Lower lobe of right lung (tissue), 2 donors: ENCODE measurements at regions of chr13 and their contacts with region 1.

Region 1: GRCh38 chr13:76903544-76904162 is 17.4 kb upstream of the KCTD12 start:
- DNase-seq: peak; percentile 60
- ATAC-seq: peak; percentile 92 to 97
- H3K4me3 ChIP-seq: no peak overlapping the region
- H3K27ac ChIP-seq: no peak overlapping the region
- H3K4me1 ChIP-seq: no peaks in the 10 kb centered on the region
- H3K27me3 ChIP-seq: no peaks in the 10 kb centered on the region
- CTCF ChIP-seq: peak; percentile 98

Region 2: DNA sequence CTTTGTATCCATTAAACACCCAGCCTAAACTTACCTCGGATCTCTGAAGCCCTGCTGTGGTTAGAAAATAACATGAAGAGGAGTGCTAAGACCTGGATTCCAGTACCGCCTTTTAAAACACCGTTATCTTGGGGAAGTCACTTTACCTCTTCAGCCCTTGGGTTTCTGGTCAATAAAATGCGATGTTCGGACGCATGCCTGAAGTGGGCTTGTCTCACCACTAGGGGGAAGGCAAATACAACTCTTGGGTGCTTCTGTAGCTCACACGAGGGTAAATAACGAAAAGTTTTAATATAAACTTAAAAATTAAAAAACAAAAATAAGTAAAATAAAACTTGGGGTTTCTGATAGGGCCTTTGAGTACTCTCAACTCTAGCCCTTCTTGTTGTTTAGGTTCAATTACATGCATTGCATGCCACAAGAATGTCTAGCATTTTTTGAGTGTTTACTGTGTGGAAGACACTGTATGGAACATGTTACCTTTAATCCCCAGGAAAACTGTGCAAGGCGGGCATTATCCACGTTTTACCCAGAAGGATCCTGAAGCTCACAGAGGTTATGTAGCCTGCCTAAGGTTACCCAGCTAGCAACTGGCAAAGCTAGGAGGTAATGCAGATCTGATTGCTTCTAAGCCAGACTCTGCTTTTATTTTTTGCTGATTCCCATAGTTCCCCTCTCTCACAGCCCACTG is 1027.1 kb before region 1 on chr13:
- intact Hi-C with region 1: loop called (anchors 10 kb)
- DNase-seq: no peak
- ATAC-seq: peak; percentile 81 to 91
- H3K4me3 ChIP-seq: no peak overlapping the region
- H3K27ac ChIP-seq: no peak overlapping the region
- H3K4me1 ChIP-seq: peaks cover 13% of the 10 kb centered on the region
- H3K27me3 ChIP-seq: no peaks in the 10 kb centered on the region
- CTCF ChIP-seq: peak; percentile 90

Region 3: DNA sequence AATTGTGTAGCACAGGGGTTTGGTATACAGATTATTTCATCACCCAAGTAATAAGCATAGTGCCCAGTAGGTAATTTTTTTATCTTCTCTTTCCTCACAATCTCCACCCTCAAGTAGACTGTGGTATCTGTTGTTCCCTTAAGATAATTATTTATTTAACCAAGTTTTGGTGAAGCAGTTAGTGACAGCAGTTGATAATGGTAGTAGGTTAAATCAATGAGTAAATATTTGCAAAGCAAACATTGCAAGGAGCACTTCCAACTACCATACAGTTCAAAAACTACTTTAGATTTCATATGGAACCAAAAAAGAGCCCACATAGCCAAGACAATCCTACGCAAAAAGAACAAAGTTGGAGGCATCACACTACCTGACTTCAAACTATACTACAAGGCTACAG is 309.2 kb before region 1 on chr13:
- intact Hi-C with region 1: no loop called
- DNase-seq: no peak
- ATAC-seq: no peak
- H3K4me3 ChIP-seq: no peak overlapping the region
- H3K27ac ChIP-seq: no peak overlapping the region
- H3K4me1 ChIP-seq: no peaks in the 10 kb centered on the region
- H3K27me3 ChIP-seq: no peaks in the 10 kb centered on the region
- CTCF ChIP-seq: no peak